Endothelial cell of umbilical vein (primary cell): ENCODE measurements at regions of chr1 and their contacts with region 1.

Region 1: GRCh38 chr1:246566128-246566812 is at the starts of genes CNST and TFB2M:
- DNase-seq: peak; percentile 99
- H3K4me3 ChIP-seq: peak within 1 kb of the TSS; percentile 79 to 91 (median 90)
- H3K27ac ChIP-seq: peak within 1 kb of the TSS; percentile 79
- H3K4me1 ChIP-seq: peaks cover 46% of the 10 kb centered on the region
- H3K27me3 ChIP-seq: no peaks in the 10 kb centered on the region
- CTCF ChIP-seq: no peak
- POLR2A ChIP-seq: peak; percentile 73
- total RNA-seq, gene CNST: 18.1 and 21.5 TPM in 2 replicates
- total RNA-seq, gene TFB2M: 14.3 and 14.8 TPM in 2 replicates

Region 2: DNA sequence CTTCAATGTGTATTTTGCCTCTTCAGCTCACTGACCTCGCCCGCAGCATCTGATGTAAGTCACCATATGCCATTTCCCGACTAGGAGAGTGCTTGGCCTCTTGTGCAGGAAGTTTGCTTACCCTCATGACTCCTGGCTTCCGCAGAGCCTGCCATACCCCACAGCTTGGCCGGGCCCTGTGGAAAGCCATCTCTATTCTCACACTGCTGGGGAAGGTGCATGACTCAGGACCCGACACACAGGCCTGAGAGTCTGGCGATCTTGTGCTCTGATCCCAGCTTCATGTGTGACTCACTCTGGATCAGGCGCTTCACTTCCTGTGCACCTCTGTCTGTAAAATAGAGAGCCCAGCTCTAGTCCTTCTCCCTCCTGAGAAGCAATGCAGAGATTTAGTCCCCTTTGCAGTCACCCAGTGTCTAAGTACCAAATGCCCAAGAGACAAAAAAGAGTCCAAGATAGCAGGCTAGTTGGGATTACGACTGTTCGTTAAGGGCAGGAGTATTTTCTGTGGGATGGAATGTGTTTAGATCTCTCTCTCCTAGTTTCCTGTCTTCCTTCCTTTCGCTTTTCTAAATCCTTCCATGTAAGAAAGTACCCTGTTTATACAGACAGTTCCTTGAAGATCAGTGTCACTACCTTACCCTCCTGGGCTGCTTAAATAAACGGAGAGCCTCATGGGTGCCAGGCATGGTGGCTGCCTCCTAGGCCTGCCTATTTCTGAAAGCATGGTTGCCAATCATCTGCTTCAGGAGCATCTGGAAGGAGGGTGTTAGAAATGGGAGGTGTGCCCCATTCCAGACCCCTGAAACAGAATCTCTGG is 1474.2 kb before region 1 on chr1:
- CTCF ChIA-PET with region 1: no interaction called
- POLR2A ChIA-PET with region 1: no interaction called
- dilution Hi-C with region 1: no loop called
- intact Hi-C with region 1: loop called (anchors 5 kb)
- DNase-seq: peak; percentile 99
- H3K4me3 ChIP-seq: no peak overlapping the region
- H3K27ac ChIP-seq: peak overlapping the region; percentile 96
- H3K4me1 ChIP-seq: peaks cover 23% of the 10 kb centered on the region
- H3K27me3 ChIP-seq: no peaks in the 10 kb centered on the region
- CTCF ChIP-seq: no peak
- POLR2A ChIP-seq: peak; percentile 63

Region 3: GRCh38 chr1:246587606-246588005 is 21.3 kb after region 1 on chr1:
- CTCF ChIA-PET with region 1: interaction called, 9 read pairs
- POLR2A ChIA-PET with region 1: no interaction called
- dilution Hi-C with region 1: no loop called
- intact Hi-C with region 1: loop called (anchors 1 kb)
- DNase-seq: peak; percentile 84
- H3K4me3 ChIP-seq: peak overlapping the region in 1 of 3 experiments; percentile 40
- H3K27ac ChIP-seq: peak overlapping the region; percentile 91
- H3K4me1 ChIP-seq: peaks cover 24% of the 10 kb centered on the region
- H3K27me3 ChIP-seq: no peaks in the 10 kb centered on the region
- CTCF ChIP-seq: no peak
- POLR2A ChIP-seq: no peak

Region 4: DNA sequence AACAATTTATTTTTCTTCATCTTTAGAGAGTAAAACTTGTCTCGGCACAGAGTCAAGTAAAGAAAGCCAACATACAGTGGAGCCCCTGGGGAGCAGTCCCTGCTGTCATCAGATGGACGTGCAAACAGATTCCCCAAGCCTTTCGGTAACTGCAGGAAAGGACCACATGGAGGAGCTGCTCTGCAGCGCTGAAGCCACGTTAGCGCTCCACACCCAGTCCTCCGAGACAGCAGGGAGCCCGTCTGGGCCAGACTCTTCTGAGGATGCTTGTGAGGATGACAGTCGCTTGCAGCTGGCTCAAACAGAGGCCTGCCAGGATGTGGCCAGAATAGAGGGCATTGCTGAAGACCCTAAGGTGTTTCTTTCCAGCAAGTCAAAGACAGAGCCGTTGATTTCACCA is 80.8 kb after region 1 on chr1:
- CTCF ChIA-PET with region 1: no interaction called
- POLR2A ChIA-PET with region 1: no interaction called
- dilution Hi-C with region 1: no loop called
- intact Hi-C with region 1: loop called (anchors 10 kb)
- DNase-seq: no peak
- H3K4me3 ChIP-seq: no peak overlapping the region
- H3K27ac ChIP-seq: no peak overlapping the region
- H3K4me1 ChIP-seq: no peaks in the 10 kb centered on the region
- H3K27me3 ChIP-seq: no peaks in the 10 kb centered on the region
- CTCF ChIP-seq: peak in 1 of 2 donors; percentile 14
- POLR2A ChIP-seq: no peak

Region 5: GRCh38 chr1:246699095-246699735 is 132.9 kb after region 1 on chr1:
- CTCF ChIA-PET with region 1: no interaction called
- POLR2A ChIA-PET with region 1: no interaction called
- dilution Hi-C with region 1: no loop called
- intact Hi-C with region 1: loop called (anchors 1 kb)
- DNase-seq: peak; percentile 93
- H3K4me3 ChIP-seq: no peak overlapping the region
- H3K27ac ChIP-seq: peak overlapping the region; percentile 53
- H3K4me1 ChIP-seq: peaks cover 5% of the 10 kb centered on the region
- H3K27me3 ChIP-seq: no peaks in the 10 kb centered on the region
- CTCF ChIP-seq: peak; percentile 91 to 92
- POLR2A ChIP-seq: no peak